Natural killer cell (primary cell): ENCODE measurements at regions of chr7 and their contacts with region 1.

Region 1: DNA sequence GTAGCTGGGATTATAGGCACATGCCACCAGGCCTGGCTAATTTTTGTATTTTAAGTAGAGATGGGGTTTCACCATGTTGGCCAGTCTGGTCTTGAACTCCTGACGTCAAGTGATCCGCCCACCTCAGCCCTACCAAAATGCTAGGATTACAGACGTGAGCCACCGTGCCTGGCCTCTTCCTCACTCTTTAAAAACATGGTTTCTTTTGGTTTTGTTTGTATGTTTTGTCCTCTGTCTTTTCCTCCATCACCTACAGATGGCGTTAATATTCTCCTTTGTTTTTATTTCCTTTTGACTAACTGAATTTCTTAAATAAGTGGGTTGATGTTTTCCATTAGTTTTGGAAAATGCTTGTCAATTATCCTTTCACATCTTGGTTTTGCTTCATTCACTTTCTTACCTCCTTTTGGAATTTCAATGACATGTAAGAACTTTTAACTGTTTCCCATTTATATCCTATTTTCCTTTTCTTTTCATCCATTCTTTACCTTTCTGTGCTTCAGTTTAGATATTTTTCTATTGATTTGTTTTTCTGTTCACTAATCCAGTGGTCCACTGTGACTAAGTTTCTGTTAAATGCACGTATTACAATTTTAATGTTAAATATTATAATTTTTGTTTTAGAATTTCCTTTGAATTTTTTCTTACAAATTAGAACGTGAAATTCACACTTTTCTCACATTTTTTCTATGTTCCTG is 104.1 kb downstream of the ZNF467 start:
- DNase-seq: peak in 1 of 2 donors; percentile 39
- ATAC-seq: no peak
- H3K4me3 ChIP-seq: no peak overlapping the region
- H3K4me3 Mint-ChIP-seq: no peak overlapping the region
- H3K27ac ChIP-seq: no peak overlapping the region
- H3K27ac Mint-ChIP-seq: no peak overlapping the region
- H3K4me1 ChIP-seq: no peaks in the 10 kb centered on the region
- H3K4me1 Mint-ChIP-seq: no peaks in the 10 kb centered on the region
- H3K27me3 ChIP-seq: no peaks in the 10 kb centered on the region
- H3K27me3 Mint-ChIP-seq: peaks cover 37 to 62% of the 10 kb centered on the region in 2 donors
- CTCF ChIP-seq: no peak

Region 2: GRCh38 chr7:149450821-149451220 is 218.4 kb before region 1 on chr7:
- intact Hi-C with region 1: no loop called
- DNase-seq: no peak
- ATAC-seq: no peak
- H3K4me3 ChIP-seq: no peak overlapping the region
- H3K4me3 Mint-ChIP-seq: no peak overlapping the region
- H3K27ac ChIP-seq: no peak overlapping the region
- H3K27ac Mint-ChIP-seq: no peak overlapping the region
- H3K4me1 ChIP-seq: no peaks in the 10 kb centered on the region
- H3K4me1 Mint-ChIP-seq: peaks cover 0 to 6% of the 10 kb centered on the region in 2 donors
- H3K27me3 ChIP-seq: no peaks in the 10 kb centered on the region
- H3K27me3 Mint-ChIP-seq: no peaks in the 10 kb centered on the region
- CTCF ChIP-seq: no peak

Region 3: GRCh38 chr7:149742075-149742701 is 72.9 kb after region 1 on chr7:
- intact Hi-C with region 1: loop called (anchors 1 kb)
- DNase-seq: peak; percentile 55 to 73
- ATAC-seq: peak; percentile 58 to 82 (median 72)
- H3K4me3 ChIP-seq: peak overlapping the region; percentile 24
- H3K4me3 Mint-ChIP-seq: peak overlapping the region; percentile 77
- H3K27ac ChIP-seq: no peak overlapping the region
- H3K27ac Mint-ChIP-seq: no peak overlapping the region
- H3K4me1 ChIP-seq: peaks cover 11% of the 10 kb centered on the region
- H3K4me1 Mint-ChIP-seq: peaks cover 10% of the 10 kb centered on the region in 2 donors
- H3K27me3 ChIP-seq: peaks cover 5% of the 10 kb centered on the region
- H3K27me3 Mint-ChIP-seq: peaks cover 35 to 44% of the 10 kb centered on the region in 2 donors
- CTCF ChIP-seq: peak; percentile 93